Naive thymus-derived CD4-positive, alpha-beta T cell (primary cell): ENCODE measurements at regions of chr15 and their contacts with region 1.

Region 1: GRCh38 chr15:55168329-55168974 is 28.3 kb downstream of the RSL24D1 start:
- DNase-seq: peak in 7 of 9 donors; percentile 12 to 43 (median 29)
- ATAC-seq: peak; percentile 77
- H3K4me3 ChIP-seq: no peak overlapping the region
- H3K4me3 Mint-ChIP-seq: no peak overlapping the region
- H3K27ac ChIP-seq: no peak overlapping the region
- H3K27ac Mint-ChIP-seq: no peak overlapping the region
- H3K4me1 ChIP-seq: no peaks in the 10 kb centered on the region
- H3K4me1 Mint-ChIP-seq: peaks cover 0 to 3% (median 0%) of the 10 kb centered on the region in 7 donors
- H3K27me3 ChIP-seq: no peaks in the 10 kb centered on the region
- H3K27me3 Mint-ChIP-seq: no peaks in the 10 kb centered on the region

Region 2: DNA sequence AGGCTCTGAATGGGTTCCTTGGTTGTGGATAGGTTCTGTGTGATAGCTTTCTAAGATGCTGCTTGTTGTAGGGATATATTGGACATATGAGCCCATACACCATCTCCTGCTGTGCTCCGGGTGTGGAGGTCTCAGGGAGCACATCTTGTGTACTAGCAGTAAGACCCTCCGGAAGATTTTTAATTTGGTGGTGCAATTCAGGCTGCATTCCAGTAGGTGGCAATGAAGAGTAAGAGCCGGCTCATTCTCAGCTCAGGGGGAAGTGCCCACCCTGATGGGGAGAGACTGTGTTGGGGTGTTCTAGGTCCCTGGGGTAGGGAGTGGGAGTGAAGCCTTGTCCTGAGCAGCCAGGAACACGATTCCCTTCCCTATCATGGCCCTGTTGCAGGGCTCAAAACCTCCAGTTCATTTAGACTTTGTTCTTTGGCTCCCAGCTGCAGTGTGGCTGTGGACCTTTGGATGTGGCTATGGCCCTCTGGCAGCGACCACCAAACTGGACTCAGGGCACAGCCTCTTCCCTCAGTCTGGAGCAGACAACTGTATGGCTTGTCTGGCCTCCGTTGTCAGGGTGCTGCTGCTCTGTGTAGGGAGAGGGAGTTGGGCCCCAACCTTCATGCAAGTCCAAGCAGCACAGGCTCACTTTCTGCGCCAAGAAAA is 1085.5 kb before region 1 on chr15:
- CTCF ChIA-PET with region 1: no interaction called
- POLR2A ChIA-PET with region 1: no interaction called
- intact Hi-C with region 1: loop called in 1 of 2 experiments (anchors 5 kb)
- DNase-seq: peak in 2 of 9 donors; percentile 0 to 4
- ATAC-seq: no peak
- H3K4me3 ChIP-seq: no peak overlapping the region
- H3K4me3 Mint-ChIP-seq: no peak overlapping the region
- H3K27ac ChIP-seq: no peak overlapping the region
- H3K27ac Mint-ChIP-seq: no peak overlapping the region
- H3K4me1 ChIP-seq: no peaks in the 10 kb centered on the region
- H3K4me1 Mint-ChIP-seq: no peaks in the 10 kb centered on the region
- H3K27me3 ChIP-seq: no peaks in the 10 kb centered on the region
- H3K27me3 Mint-ChIP-seq: peaks cover 0 to 23% (median 5%) of the 10 kb centered on the region in 5 donors

Region 3: DNA sequence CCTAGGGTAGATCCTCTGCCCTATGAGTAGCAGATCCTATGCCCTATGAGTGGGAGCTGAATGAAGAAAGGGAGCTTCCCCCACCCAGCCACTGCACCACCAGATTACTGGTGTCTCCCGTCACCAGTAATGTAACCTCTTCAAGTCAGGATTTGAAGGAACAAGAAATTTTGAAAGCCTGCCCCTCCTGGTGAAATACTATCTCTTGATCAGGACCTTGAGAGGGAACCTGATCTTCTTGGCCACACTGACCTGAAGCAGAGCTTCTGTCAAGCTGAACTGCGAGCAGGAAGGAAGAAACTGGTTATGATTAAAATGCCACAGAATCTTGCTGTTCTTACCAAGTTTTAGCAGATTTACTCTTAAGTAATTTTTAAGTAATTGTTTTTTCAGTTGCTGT is 34.5 kb before region 1 on chr15:
- CTCF ChIA-PET with region 1: no interaction called
- POLR2A ChIA-PET with region 1: no interaction called
- intact Hi-C with region 1: no loop called
- DNase-seq: no peak
- ATAC-seq: no peak
- H3K4me3 ChIP-seq: no peak overlapping the region
- H3K4me3 Mint-ChIP-seq: no peak overlapping the region
- H3K27ac ChIP-seq: no peak overlapping the region
- H3K27ac Mint-ChIP-seq: no peak overlapping the region
- H3K4me1 ChIP-seq: no peaks in the 10 kb centered on the region
- H3K4me1 Mint-ChIP-seq: no peaks in the 10 kb centered on the region
- H3K27me3 ChIP-seq: no peaks in the 10 kb centered on the region
- H3K27me3 Mint-ChIP-seq: peaks cover 5 to 19% (median 11%) of the 10 kb centered on the region in 5 donors

Region 4: GRCh38 chr15:55279746-55280351 is 111.4 kb after region 1 on chr15:
- CTCF ChIA-PET with region 1: no interaction called
- POLR2A ChIA-PET with region 1: no interaction called
- intact Hi-C with region 1: no loop called
- DNase-seq: peak in 5 of 9 donors; percentile 4 to 55 (median 20)
- ATAC-seq: peak; percentile 68
- H3K4me3 ChIP-seq: peak overlapping the region; percentile 21
- H3K4me3 Mint-ChIP-seq: peak overlapping the region; percentile 16 to 82 (median 61)
- H3K27ac ChIP-seq: peak overlapping the region; percentile 59
- H3K27ac Mint-ChIP-seq: peak overlapping the region; percentile 68 to 95 (median 87)
- H3K4me1 ChIP-seq: peaks cover 43 to 89% of the 10 kb centered on the region in 2 donors
- H3K4me1 Mint-ChIP-seq: peaks cover 38 to 99% (median 90%) of the 10 kb centered on the region in 7 donors
- H3K27me3 ChIP-seq: no peaks in the 10 kb centered on the region
- H3K27me3 Mint-ChIP-seq: no peaks in the 10 kb centered on the region